OCI-LY7 (cell line): ENCODE measurements at regions of chr1 and their contacts with region 1.

Region 1: DNA sequence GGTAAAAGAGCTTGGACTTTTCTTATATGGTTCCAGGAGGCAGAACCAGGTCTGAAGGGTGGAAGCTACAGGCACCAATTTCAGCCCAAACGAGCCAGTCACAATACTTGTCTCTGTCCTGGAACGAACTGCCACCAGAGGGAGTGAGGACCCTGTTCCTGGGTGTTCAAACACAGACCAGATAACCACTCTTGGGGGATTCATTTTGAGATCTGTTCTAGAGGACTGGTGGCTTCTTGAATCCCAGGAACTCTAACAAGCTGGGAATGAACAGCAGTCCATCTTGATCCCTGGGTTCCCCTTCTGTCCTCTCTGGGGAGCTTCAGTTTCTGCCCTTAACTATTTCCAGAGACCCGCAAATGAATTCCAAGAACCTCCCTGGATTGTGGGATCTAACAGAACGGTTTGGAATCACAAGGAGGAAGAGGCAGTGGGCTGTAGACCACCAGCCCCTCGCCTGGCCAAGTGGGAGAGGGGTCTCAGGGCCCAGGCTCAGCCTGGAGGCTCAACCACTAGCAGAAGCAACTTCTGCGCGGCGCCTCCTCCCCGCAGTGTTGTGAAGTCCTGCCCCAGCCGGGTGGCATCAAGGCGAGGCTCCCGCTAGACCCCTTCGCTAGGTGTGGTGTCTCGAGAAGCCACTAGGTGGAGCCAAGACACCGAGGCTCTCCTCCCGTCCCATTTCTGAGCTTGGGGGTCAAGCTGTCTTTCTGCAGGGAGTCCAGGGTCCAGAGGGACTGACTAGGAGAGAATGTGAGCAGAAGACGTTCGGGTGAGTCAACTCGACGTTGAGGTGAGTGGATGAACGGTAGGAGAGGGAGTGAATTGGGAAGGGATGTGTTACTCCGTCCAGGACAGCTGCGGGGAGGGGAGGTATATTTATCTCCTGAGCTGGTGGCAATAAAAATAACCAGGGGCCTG is 12.1 kb upstream of the NES start:
- DNase-seq: peak; percentile 86
- H3K4me3 ChIP-seq: peak overlapping the region; percentile 18
- H3K27ac ChIP-seq: no peak overlapping the region
- H3K4me1 ChIP-seq: peaks cover 17% of the 10 kb centered on the region
- CTCF ChIP-seq: peak; percentile 81

Region 2: GRCh38 chr1:156705918-156706656 is 16.8 kb after region 1 on chr1:
- CTCF ChIA-PET with region 1: interaction called, 19 read pairs
- POLR2A ChIA-PET with region 1: no interaction called
- intact Hi-C with region 1: loop called (anchors 1 kb)
- DNase-seq: peak; percentile 55
- H3K4me3 ChIP-seq: peak overlapping the region; percentile 53
- H3K27ac ChIP-seq: no peak overlapping the region
- H3K4me1 ChIP-seq: peaks cover 17% of the 10 kb centered on the region
- CTCF ChIP-seq: peak; percentile 95

Region 3: GRCh38 chr1:156797212-156797871 is 108.0 kb after region 1 on chr1:
- CTCF ChIA-PET with region 1: no interaction called
- POLR2A ChIA-PET with region 1: no interaction called
- intact Hi-C with region 1: loop called (anchors 10 kb)
- DNase-seq: peak; percentile 61
- H3K4me3 ChIP-seq: no peak overlapping the region
- H3K27ac ChIP-seq: no peak overlapping the region
- H3K4me1 ChIP-seq: peaks cover 15% of the 10 kb centered on the region
- CTCF ChIP-seq: peak; percentile 94

Region 4: DNA sequence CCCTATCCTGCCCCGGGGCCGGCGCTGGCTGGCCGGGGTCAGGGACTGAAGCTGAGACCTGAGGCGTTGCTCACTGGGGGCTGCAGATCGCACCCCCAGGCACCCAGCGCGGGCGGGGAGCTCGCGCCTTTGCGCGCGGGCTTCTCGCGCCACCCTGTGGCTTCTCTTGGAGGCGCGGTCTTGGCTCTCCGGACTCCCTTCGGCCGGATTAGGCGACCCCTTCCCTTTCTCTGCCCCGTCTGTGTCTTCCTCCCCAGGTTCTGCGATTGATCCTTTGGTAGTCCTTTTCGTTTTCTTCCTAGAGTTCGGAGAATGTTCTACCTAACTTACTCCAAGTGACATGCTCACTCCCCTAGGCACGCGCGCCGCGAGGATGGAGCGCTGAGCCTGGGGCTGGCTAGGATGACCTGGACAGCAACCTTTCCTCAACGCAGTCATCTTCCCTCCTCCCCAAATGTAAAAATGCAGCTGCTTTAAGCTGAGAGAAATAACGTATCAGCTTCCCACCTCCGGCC is 170.9 kb after region 1 on chr1:
- CTCF ChIA-PET with region 1: no interaction called
- POLR2A ChIA-PET with region 1: no interaction called
- intact Hi-C with region 1: loop called (anchors 1 kb)
- DNase-seq: peak; percentile 63
- H3K4me3 ChIP-seq: peak overlapping the region; percentile 11
- H3K27ac ChIP-seq: no peak overlapping the region
- H3K4me1 ChIP-seq: peaks cover 4% of the 10 kb centered on the region
- CTCF ChIP-seq: peak; percentile 83

Region 5: GRCh38 chr1:156876281-156876680 is 187.0 kb after region 1 on chr1:
- CTCF ChIA-PET with region 1: no interaction called
- POLR2A ChIA-PET with region 1: no interaction called
- intact Hi-C with region 1: no loop called
- DNase-seq: no peak
- H3K4me3 ChIP-seq: no peak overlapping the region
- H3K27ac ChIP-seq: no peak overlapping the region
- H3K4me1 ChIP-seq: no peaks in the 10 kb centered on the region
- CTCF ChIP-seq: no peak

Region 6: DNA sequence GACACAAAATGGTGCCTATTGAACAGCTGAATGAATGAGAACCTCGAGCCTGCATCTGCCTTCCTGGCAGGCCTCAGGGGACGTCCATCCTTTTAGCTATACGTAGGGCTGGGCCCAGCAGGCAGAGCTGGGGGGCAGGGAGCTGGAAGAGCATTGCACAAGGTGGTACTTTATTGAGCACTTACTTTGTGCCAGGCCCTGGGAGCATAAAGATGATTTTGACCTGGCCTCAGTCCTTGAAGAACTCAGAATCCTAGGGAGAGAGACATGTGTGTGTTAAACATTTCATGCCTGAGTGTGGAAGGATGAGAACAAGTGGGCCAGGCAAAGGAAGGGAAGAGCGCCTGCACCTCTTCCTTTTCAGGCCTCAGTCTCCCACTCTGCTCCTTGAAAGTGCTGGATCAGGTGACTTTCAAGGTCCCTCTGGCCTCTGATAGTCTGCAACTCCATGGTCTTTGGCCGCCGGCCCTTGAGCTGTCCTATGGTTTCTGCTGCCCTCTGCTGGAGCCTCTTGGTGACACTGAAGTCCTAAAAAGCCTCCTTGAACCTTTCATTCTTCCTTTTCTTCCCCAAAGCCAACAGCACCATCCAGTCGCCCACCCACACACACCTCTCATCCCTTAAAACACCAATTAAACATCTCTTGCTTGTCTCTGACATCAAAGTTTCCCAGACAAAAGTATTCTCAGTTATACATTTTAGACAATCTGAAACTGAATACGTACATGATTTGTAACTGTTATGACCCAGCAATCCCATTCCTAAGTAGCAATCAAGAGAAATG is 200.7 kb after region 1 on chr1:
- CTCF ChIA-PET with region 1: interaction called, 5 read pairs
- POLR2A ChIA-PET with region 1: no interaction called
- intact Hi-C with region 1: loop called (anchors 1 kb)
- DNase-seq: peak; percentile 74
- H3K4me3 ChIP-seq: no peak overlapping the region
- H3K27ac ChIP-seq: no peak overlapping the region
- H3K4me1 ChIP-seq: no peaks in the 10 kb centered on the region
- CTCF ChIP-seq: peak; percentile 86